B cell (primary cell): ENCODE measurements at regions of chr2 and their contacts with region 1.

Region 1: DNA sequence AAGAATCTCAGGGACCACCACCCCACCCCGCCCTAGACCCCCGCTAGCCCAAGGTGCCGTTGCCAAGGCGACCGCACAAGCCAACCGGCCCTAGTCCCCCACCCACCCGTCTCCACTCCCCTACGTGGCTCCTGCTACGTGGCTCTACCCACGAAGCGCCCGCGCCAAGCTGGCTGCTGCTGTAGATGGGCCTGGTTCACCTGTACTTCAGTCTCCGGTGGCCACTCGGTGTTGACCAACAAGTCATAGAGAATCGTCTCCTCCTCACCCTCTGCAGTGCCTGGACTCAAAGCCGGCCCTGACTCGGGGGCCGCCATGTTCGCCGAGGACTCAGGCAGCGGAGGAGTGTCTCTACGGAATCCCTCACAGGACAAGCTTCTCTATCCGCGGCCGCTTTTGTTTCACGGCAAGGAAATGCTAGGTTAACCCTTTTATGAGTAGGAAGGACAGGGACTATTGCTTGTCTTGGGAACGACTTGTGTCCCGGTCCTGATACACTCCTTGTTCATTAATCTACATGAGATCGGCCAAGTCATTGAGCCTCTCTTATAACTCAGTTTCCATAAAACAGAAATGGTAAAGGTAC is at the start of gene NBAS:
- DNase-seq: peak; percentile 86
- ATAC-seq: peak; percentile 87
- H3K4me3 ChIP-seq: peak within 1 kb of the TSS; percentile 72 to 89 (median 76)
- H3K4me3 Mint-ChIP-seq: peak within 1 kb of the TSS; percentile 100
- H3K27ac ChIP-seq: peak within 1 kb of the TSS; percentile 52 to 69
- H3K27ac Mint-ChIP-seq: peak within 1 kb of the TSS; percentile 98
- H3K4me1 ChIP-seq: peaks cover 12 to 15% of the 10 kb centered on the region in 2 donors
- H3K4me1 Mint-ChIP-seq: peaks cover 38% of the 10 kb centered on the region
- H3K27me3 ChIP-seq: no peaks in the 10 kb centered on the region
- H3K27me3 Mint-ChIP-seq: peaks cover 7% of the 10 kb centered on the region
- CTCF ChIP-seq: no peak
- total RNA-seq, gene NBAS: 37.3 and 37.7 TPM in 2 replicates

Region 2: DNA sequence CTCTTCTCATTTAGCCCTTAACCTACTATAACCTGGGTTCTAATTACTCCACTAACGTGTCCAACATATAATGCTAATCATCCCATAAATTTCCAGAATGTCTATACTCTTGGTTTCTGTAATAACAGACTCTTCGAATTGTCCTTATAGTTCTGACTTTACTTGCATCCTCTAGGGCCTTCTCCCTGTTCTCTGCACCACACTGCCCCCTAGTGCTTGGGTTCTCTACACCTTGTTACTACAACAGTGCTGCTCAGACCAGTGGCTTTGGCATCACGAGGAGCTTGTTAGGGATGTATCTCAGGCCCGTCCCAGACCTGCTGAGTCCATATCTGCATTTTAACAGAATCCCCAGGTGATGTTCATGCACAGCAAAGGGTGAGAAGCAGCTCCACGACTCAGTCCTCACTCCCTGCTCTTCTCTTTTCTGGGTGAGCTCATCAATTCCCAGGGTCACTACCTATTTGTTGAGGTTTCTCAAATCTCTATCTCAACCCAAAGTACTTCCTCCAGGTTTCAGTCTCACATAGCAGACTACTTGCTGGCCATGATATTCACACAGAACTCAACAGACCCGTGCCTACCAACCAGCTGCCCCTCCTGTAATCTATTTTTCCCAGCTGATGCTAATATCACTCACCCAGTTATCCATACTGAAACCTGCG is 16.1 kb after region 1 on chr2:
- CTCF ChIA-PET with region 1: interaction called, 34 read pairs
- POLR2A ChIA-PET with region 1: no interaction called
- intact Hi-C with region 1: no loop called
- DNase-seq: peak; percentile 80
- ATAC-seq: peak; percentile 94
- H3K4me3 ChIP-seq: no peak overlapping the region
- H3K4me3 Mint-ChIP-seq: no peak overlapping the region
- H3K27ac ChIP-seq: no peak overlapping the region
- H3K27ac Mint-ChIP-seq: no peak overlapping the region
- H3K4me1 ChIP-seq: peaks cover 1 to 6% of the 10 kb centered on the region in 2 donors
- H3K4me1 Mint-ChIP-seq: peaks cover 7% of the 10 kb centered on the region
- H3K27me3 ChIP-seq: peaks cover 0 to 5% (median 2%) of the 10 kb centered on the region in 4 experiments
- H3K27me3 Mint-ChIP-seq: no peaks in the 10 kb centered on the region
- CTCF ChIP-seq: peak; percentile 87